ENCODE measurements at regions of chr3 and their contacts with region 1.

Region 1: GRCh38 chr3:185207931-185208746 is 45.7 kb downstream of the EHHADH start:
- DNase-seq: no peak
- H3K4me3 Mint-ChIP-seq: no peak overlapping the region
- H3K27ac Mint-ChIP-seq: no peak overlapping the region
- H3K4me1 Mint-ChIP-seq: no peaks in the 10 kb centered on the region
- H3K27me3 Mint-ChIP-seq: no peaks in the 10 kb centered on the region
- CTCF ChIP-seq: no peak

Region 2: DNA sequence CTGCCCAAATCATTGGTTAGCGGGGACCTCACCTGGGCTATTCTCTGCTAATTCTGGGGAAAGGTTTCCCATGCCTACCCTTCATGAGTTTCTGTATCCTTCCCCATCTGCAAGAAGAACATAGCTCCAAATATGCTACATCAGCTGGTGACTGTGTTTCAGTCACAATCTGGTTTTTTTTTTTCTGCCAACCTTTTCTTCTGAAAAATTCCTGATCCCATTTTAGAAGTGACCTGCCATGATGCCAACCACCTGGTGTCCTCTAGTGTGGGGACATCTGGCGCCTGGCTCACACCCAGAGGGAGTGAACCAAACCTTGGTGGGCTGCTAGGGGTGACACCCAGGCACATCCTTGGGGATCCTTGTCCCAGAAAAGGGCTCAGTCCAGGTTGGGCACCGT is 752.1 kb before region 1 on chr3:
- CTCF ChIA-PET with region 1: no interaction called
- intact Hi-C with region 1: no loop called
- DNase-seq: no peak
- H3K4me3 Mint-ChIP-seq: no peak overlapping the region
- H3K27ac Mint-ChIP-seq: no peak overlapping the region
- H3K4me1 Mint-ChIP-seq: no peaks in the 10 kb centered on the region
- H3K27me3 Mint-ChIP-seq: peaks cover 19% of the 10 kb centered on the region
- CTCF ChIP-seq: no peak

Region 3: DNA sequence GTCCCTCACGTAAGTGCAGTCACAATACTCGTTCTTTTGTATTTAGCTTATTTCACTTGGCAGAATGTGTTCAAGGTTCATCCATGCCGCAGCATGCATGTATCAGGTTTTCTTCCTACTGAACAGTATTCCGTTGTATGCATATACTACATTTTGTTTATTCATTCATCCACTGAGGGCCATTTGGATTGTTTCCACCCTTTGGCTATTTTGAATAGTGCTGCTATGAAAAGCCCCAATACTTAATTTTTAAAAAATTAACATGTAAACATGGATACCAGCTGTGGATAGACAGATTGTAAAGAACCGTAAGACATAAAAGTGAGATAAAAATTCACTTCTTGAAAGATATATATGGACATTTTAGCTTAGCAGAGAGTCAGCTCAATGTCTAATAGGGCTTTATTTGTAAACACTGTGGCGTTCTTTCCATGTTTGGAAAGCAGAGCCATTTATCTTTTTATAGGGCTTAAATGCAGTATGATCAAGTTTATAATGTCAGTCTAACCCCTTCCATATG is 280.3 kb before region 1 on chr3:
- CTCF ChIA-PET with region 1: interaction called, 16 read pairs
- intact Hi-C with region 1: no loop called
- DNase-seq: no peak
- H3K4me3 Mint-ChIP-seq: no peak overlapping the region
- H3K27ac Mint-ChIP-seq: no peak overlapping the region
- H3K4me1 Mint-ChIP-seq: no peaks in the 10 kb centered on the region
- H3K27me3 Mint-ChIP-seq: no peaks in the 10 kb centered on the region
- CTCF ChIP-seq: no peak